Head of caudate nucleus (tissue), 42 donors: ENCODE measurements at regions of chr17 and their contacts with region 1.

Region 1: DNA sequence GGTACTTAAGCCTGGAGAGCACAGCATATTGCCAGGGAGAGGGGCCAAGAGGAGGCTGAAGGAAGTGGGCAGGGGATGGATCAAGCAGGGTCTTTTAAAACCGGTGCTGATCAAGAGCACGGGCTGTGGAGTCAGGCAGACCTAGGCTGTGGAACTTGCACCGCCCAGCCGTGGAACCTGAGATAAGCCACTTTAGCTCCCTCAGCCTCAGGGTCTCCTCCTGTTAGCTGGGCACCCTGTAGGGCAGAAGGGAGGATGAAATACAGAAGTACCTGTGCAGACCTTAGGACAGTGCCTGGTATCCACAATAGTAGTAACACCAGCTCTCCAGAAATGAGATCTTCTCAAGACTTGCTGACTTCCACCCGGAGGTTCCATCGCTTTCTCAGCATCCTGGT is 9.3 kb downstream of the ODAD4 start:
- DNase-seq: no peak

Region 2: DNA sequence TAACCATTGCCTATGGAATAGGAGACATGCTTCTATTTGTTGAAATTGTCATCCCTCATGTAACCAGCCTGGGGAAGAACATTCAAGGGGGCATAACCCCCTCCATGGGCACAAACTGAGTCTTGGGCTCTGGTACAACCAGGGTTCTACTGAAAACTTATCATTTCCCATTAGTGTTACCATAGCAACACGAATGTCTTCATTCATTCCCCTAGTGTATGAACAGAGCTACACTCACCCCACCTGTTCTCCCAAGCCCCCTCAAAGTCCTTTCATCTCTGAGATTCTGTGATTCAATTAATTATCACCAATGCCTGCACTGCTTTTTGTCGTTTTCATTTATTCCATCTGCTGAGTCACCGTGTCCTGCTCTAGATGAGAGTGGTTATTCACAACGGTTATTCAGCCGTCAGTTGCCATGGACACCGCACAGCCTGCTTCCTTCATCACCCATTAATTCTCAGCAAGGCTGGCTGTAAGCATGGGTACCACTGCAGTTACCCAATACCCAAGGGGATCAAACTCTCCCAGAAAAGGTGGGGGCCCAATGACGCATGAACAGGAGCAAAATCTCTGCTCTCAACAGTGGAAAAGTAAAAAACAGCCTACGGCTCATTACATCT is 229.1 kb before region 1 on chr17:
- intact Hi-C with region 1: no loop called
- DNase-seq: peak; percentile 34 to 94 (median 72)

Region 3: DNA sequence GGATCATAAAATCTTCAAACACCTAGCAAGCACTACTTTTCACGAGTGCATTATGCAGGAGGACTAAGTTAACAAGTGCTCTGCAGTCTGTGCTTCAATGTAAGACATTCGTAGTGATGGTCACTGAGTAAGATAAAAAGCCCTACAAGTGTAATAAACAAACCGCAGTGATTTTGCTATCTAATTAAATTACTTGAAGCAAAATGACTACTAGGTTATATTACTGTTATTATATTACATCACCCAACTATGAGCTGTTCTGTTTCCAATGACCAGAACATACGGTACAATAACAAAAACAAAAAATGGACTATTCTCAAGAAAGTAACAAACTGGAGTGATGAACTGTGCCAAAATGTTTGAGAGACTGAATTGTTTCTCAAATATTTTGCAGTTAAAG is 90.9 kb before region 1 on chr17:
- intact Hi-C with region 1: no loop called
- DNase-seq: no peak

Region 4: DNA sequence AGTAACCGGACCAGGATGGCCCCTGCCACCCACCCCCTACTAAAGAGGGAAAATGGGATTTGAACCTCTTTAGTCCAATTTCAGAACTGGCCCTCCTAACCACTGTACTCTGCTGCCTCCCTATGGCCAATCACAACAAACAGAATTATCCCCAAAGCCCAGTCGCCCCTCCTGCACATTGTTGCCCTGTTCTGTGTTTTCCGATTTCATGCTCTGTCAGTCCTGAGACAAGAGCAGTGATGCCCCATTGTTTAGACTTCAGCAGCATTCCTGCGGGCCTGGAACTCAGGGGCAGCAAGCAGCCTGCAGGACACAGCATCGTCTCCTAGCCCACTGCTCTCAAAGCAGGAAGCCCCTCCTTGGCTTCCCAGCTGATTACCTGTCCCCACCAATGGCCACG is 54.0 kb before region 1 on chr17:
- intact Hi-C with region 1: no loop called
- DNase-seq: peak in 4 of 42 donors; percentile 9 to 34 (median 19)

Region 5: GRCh38 chr17:41957031-41957868 is 17.6 kb after region 1 on chr17:
- intact Hi-C with region 1: loop called (anchors 2 kb)
- DNase-seq: no peak